ENCODE measurements at regions of chr10 and their contacts with region 1.

Region 1: DNA sequence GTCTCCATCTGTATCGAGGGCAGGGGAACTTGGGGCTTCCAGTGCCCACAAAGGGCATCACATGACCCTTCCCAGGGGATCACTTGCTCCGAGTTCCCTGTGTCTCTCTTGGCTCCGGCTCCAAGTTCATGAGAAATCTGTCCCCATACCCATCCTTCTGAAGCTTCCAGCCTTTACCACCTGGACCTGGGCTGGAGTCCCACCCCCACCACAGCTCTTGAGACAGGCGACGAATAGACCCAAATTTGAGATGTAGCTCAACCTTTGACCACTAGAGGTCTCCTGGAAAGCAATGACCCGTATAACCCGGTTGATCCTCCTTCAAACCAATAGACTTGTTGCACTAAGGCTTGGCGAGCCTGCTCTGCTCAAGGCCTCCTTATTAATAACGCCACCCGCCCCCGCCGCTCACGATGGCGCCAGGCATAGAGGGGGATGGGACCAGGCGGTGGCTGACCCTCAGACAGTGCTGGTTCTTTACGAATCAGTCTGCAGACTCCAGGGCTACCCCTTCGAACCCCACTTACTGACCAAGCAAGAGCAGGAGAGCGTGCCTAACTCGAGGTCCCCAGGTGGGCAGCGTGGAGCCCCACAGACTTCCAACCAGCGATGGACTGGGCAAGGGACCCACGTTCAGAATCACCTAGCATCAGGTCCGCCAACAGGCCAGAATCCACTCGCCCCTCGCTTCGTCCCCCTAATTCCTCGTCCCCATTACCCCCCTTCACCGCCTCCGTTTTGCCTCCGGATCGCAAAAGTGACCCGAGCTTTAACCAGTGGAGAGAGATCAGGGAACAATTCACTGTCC is 4.4 kb upstream of the ARID5B start:
- DNase-seq: peak; percentile 35 to 89
- ATAC-seq: peak; percentile 65 to 81 (median 77)
- H3K4me3 ChIP-seq: peak overlapping the region; percentile 13
- H3K4me3 Mint-ChIP-seq: peak overlapping the region; percentile 92
- H3K27ac ChIP-seq: no peak overlapping the region
- H3K27ac Mint-ChIP-seq: peak overlapping the region; percentile 78 to 89
- H3K4me1 ChIP-seq: peaks cover 13% of the 10 kb centered on the region
- H3K4me1 Mint-ChIP-seq: peaks cover 44 to 50% of the 10 kb centered on the region in 2 donors
- H3K27me3 ChIP-seq: no peaks in the 10 kb centered on the region
- H3K27me3 Mint-ChIP-seq: no peaks in the 10 kb centered on the region
- CTCF ChIP-seq: peak; percentile 74

Region 2: DNA sequence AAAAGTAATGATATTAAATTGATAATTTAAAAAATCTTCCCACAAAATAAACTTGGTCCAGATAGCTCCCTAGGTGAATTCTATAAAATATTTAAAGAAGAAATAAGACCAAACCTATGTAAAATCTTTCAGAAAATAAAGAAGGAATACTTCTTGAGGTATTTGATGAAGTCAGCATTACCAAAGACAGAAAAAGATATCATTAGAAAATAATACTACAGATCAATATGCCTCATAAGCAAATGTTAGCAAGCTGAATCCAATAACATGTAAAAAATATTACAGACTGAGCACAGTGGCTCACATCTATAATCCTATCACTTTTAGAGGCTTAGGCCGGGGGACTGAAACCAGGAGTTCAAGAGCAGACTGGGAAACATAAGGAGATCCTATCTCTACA is 473.9 kb before region 1 on chr10:
- intact Hi-C with region 1: no loop called
- DNase-seq: no peak
- ATAC-seq: no peak
- H3K4me3 ChIP-seq: no peak overlapping the region
- H3K4me3 Mint-ChIP-seq: no peak overlapping the region
- H3K27ac ChIP-seq: no peak overlapping the region
- H3K27ac Mint-ChIP-seq: no peak overlapping the region
- H3K4me1 ChIP-seq: no peaks in the 10 kb centered on the region
- H3K4me1 Mint-ChIP-seq: no peaks in the 10 kb centered on the region
- H3K27me3 ChIP-seq: no peaks in the 10 kb centered on the region
- H3K27me3 Mint-ChIP-seq: peaks cover 2 to 5% of the 10 kb centered on the region in 2 donors
- CTCF ChIP-seq: no peak

Region 3: DNA sequence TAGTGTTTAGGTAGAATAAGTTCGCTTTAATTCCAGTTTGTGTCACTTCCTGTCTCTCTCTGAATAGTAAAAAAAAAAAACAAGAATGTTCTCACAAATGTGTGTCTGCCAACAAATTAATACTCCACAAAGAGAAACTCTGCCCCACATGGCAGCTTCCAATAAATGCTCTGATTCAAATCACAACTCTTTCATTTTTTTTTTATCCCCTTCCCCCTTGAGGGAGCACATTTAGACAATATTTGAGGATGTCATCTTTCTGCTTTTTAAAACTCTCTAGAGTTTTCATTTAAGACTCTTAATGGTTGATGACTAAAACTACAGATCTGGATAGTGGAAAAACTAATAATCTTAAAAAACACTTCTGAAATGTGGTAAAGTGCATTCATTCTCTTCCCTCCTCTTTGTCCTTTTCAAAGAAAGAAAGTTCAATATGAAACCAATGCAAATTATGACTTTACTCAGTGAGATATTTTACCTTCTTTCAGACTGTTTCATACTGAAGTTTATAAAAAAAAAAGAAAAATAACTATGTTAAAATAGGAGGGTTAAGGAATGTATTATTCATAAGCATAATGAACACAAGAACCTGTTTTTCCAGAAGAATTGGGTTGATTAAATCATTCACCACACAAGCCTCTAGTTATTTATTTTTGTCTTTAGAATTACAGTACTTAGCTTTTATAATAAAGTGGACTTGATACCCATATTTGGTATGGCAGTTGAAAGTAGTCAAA is 46.8 kb after region 1 on chr10:
- intact Hi-C with region 1: loop called (anchors 1 kb)
- DNase-seq: peak in 1 of 2 donors; percentile 68
- ATAC-seq: peak; percentile 47 to 66 (median 57)
- H3K4me3 ChIP-seq: peak overlapping the region; percentile 30
- H3K4me3 Mint-ChIP-seq: peak overlapping the region; percentile 86
- H3K27ac ChIP-seq: peak overlapping the region; percentile 93
- H3K27ac Mint-ChIP-seq: peak overlapping the region; percentile 93 to 95
- H3K4me1 ChIP-seq: peaks cover 11% of the 10 kb centered on the region
- H3K4me1 Mint-ChIP-seq: peaks cover 48 to 53% of the 10 kb centered on the region in 2 donors
- H3K27me3 ChIP-seq: no peaks in the 10 kb centered on the region
- H3K27me3 Mint-ChIP-seq: no peaks in the 10 kb centered on the region
- CTCF ChIP-seq: peak; percentile 22

Region 4: DNA sequence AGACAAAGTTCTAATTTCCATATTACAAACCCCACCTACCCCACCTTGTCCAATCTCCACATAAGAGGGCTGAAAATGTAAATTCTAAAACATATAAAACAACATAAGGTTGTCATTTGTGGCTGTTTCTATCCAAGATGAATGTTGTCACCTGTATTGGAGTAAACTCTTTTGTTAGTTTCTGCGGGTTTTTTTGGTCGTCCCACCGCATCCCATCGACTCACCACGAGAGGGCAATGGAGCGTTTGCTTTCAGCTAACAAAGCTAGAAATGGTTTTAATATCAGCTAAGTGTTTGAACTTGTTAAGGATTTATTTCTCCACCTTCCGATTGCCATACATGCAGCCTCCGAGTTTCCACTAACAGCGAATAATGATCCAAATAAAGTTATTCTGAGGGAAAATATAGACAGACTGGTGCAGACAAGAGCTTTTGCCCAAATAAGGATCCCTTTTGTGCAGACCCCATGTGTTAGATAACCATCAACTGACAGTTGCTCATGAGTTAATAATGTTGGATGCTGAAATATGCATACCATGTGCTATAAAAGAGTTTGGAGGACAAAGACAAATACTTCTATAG is 141.6 kb after region 1 on chr10:
- intact Hi-C with region 1: loop called (anchors 2 kb)
- DNase-seq: peak; percentile 61 to 87
- ATAC-seq: peak; percentile 75 to 94 (median 88)
- H3K4me3 ChIP-seq: no peak overlapping the region
- H3K4me3 Mint-ChIP-seq: peak overlapping the region; percentile 40
- H3K27ac ChIP-seq: no peak overlapping the region
- H3K27ac Mint-ChIP-seq: peak overlapping the region; percentile 22 to 77
- H3K4me1 ChIP-seq: peaks cover 4% of the 10 kb centered on the region
- H3K4me1 Mint-ChIP-seq: peaks cover 37 to 44% of the 10 kb centered on the region in 2 donors
- H3K27me3 ChIP-seq: no peaks in the 10 kb centered on the region
- H3K27me3 Mint-ChIP-seq: no peaks in the 10 kb centered on the region
- CTCF ChIP-seq: peak; percentile 74

Region 5: DNA sequence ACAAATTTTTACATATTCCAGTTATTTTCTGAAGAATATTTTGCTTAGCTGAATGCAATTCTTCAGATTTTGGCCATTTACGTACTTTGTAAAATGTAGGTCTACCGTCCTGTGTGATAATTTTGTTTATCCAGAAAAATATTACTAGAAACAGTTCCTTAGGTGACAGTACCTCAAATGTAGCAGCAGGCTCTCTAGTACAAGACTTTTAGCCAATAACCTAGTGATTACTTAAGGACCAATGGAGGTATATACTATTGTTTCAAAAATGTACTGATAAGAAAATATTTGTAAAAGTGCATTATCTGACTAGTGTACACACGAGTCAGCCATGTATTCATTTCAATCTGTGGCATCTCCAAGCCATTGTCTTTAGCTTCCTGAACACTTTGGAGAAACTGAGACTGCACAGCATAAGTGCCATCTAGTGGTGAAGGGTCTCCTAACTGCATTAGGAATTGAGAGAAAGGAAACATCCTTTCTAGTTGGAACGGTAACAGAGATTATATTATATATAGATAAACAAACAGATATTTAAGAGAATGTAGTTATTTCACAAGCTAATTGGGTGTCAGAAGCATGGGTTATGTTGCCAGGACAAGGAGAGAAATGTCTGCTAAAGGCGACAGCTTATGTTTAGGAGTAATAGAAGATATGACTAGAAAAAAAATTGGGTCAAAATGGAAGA is 347.9 kb after region 1 on chr10:
- intact Hi-C with region 1: loop called (anchors 1 kb)
- DNase-seq: peak in 1 of 2 donors; percentile 84
- ATAC-seq: peak; percentile 74 to 83 (median 80)
- H3K4me3 ChIP-seq: no peak overlapping the region
- H3K4me3 Mint-ChIP-seq: no peak overlapping the region
- H3K27ac ChIP-seq: no peak overlapping the region
- H3K27ac Mint-ChIP-seq: no peak overlapping the region
- H3K4me1 ChIP-seq: no peaks in the 10 kb centered on the region
- H3K4me1 Mint-ChIP-seq: peaks cover 6 to 17% of the 10 kb centered on the region in 2 donors
- H3K27me3 ChIP-seq: no peaks in the 10 kb centered on the region
- H3K27me3 Mint-ChIP-seq: no peaks in the 10 kb centered on the region
- CTCF ChIP-seq: peak; percentile 93